PC-9 (cell line): ENCODE measurements at regions of chr1 and their contacts with region 1.

Region 1: DNA sequence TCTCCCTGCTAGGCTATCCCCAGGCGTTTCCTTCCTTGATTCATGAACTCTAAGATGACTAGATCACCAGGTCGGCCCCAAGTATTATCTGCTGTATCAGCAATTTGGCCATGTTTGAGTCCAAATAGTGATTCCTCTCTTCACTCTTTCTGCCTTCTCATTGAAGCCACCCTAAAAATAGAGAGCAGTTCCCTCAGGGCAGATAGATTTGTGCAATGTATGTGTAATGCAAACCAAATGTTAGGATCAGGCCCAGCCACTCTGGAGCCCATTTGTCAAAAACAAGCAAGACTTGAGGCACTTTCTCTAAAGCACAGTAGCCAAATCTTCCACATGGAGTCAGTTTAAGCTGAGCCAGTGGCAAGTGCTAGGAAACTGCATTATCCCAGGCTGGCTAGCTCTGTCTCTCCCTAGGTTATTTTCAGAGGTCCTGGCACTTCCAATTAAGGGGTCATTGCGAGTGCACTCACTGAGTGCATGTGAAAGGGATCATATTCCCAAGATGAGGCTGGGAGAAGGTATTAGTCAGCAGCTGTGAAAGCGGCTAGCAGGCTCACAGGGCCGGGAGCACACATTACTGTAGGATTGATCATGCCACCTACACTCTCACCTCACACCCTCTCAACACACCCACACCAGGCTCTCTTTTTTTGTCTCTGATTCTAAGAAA is 97.9 kb upstream of the RAB3GAP2 start:
- DNase-seq: peak; percentile 77 to 95
- H3K4me3 ChIP-seq: peak overlapping the region; percentile 10; the same call in 1 of the 2 replicates
- H3K27ac ChIP-seq: peak overlapping the region; percentile 94
- H3K4me1 ChIP-seq: peaks cover 54% of the 10 kb centered on the region
- H3K27me3 ChIP-seq: no peaks in the 10 kb centered on the region
- CTCF ChIP-seq: no peak

Region 2: DNA sequence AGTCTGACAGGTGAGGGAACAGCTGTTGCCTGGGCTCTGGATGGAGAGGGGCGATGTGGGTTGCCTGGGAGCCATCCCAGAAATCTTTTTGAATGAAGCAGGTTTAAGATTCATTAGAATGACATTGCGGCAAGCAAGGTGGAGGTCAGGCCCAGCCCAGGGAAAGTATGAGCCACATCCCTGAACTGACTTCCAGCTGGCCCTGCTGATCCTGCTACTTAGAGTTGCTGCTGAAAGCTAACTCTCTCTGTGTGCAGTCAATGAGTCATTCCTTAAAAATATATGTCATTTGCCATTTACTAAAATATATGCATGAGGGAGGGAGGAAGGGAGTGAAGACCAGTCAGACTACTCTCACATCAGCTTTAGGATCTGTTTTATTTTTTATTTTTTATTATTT is 43.6 kb before region 1 on chr1:
- CTCF ChIA-PET with region 1: interaction called, 4 read pairs
- POLR2A ChIA-PET with region 1: no interaction called
- intact Hi-C with region 1: loop called (anchors 1 kb)
- DNase-seq: peak; percentile 77 to 81
- H3K4me3 ChIP-seq: no peak overlapping the region
- H3K27ac ChIP-seq: peak overlapping the region; percentile 49; the same call in 1 of the 2 replicates
- H3K4me1 ChIP-seq: peaks cover 16% of the 10 kb centered on the region
- H3K27me3 ChIP-seq: no peaks in the 10 kb centered on the region
- CTCF ChIP-seq: no peak

Region 3: GRCh38 chr1:220336391-220337031 is 33.7 kb before region 1 on chr1:
- CTCF ChIA-PET with region 1: interaction called, 5 read pairs
- POLR2A ChIA-PET with region 1: no interaction called
- intact Hi-C with region 1: loop called (anchors 1 kb)
- DNase-seq: no peak
- H3K4me3 ChIP-seq: no peak overlapping the region
- H3K27ac ChIP-seq: peak overlapping the region; percentile 49
- H3K4me1 ChIP-seq: peaks cover 33% of the 10 kb centered on the region
- H3K27me3 ChIP-seq: no peaks in the 10 kb centered on the region
- CTCF ChIP-seq: no peak

Region 4: DNA sequence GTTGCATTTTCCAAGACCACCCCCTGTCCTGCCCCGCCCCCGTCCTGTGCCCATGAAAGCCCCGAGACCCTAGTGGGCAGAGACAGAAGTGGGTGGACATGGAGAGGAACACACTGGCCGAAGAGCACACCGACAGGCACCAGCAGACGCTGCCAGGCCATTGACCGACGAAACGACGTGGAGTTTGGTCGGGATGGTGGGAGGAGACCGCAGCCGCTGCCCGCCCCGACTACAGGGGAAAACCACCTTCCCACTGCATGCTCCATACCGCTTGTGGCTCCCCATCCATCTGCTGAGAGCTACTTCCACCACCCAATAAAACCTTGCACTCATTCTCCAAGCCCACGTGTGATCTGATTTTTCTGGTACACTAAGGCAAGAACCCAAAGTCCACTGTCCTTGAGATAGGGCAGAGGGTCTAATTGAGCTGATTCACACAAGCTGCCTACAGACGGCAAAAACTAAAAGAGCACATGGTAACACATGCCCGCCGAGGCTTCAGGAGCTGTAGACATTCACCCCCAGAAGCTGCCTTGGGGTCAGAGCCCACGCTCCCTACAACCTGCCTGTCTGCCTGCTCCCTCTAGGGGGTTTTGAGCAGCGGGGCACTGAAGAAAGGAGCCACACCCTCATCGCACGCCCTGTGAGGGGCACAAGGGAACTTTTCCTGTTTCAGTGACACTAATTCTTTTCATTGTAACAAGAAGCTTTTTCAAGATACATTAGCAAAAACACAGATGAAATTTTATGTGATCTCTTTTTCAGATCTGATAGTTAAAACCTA is 16.7 kb before region 1 on chr1:
- CTCF ChIA-PET with region 1: no interaction called
- POLR2A ChIA-PET with region 1: no interaction called
- intact Hi-C with region 1: no loop called
- DNase-seq: no peak
- H3K4me3 ChIP-seq: no peak overlapping the region
- H3K27ac ChIP-seq: no peak overlapping the region
- H3K4me1 ChIP-seq: no peaks in the 10 kb centered on the region
- H3K27me3 ChIP-seq: no peaks in the 10 kb centered on the region
- CTCF ChIP-seq: no peak

Region 5: DNA sequence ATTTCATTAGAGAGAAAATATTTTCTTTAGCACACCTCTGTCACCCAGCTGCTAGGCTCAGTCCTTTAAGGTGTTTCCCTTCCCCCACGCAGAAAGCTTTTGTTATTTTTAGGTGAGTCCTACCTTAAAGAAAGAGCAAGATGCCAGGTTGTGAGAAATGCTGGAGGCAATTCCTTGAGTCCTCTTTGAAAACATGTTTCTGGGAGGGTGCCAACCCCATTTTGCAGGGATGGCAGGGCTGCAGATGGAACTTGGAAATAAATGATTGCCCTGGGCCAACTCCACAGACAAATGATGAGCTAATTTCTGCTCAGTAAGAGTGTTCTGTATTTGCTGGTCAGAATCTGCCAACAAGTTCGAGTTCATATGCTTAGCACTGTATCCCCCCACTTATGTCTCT is 21.3 kb after region 1 on chr1:
- CTCF ChIA-PET with region 1: no interaction called
- POLR2A ChIA-PET with region 1: no interaction called
- intact Hi-C with region 1: loop called (anchors 2 kb)
- DNase-seq: peak; percentile 44 to 65
- H3K4me3 ChIP-seq: no peak overlapping the region
- H3K27ac ChIP-seq: no peak overlapping the region
- H3K4me1 ChIP-seq: peaks cover 18% of the 10 kb centered on the region
- H3K27me3 ChIP-seq: no peaks in the 10 kb centered on the region
- CTCF ChIP-seq: no peak

Region 6: DNA sequence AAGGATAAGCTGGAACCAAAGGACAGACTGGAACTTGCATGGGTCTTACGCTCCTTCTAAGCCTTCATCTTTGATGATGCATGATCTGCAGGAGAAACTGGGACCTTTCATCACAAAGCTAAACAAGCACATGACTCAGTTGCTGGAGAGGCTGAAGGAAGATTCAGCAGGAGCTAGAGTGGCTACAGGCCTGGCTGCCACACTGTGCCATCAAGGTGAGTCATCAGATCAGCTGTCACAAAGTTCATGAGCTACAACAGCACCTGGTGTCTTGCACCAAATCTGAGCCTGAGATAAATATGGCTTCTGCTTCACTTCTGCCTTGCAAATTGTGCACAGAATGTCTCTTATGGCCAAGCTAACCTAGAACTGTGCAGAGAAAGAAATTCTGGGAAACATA is 62.3 kb after region 1 on chr1:
- CTCF ChIA-PET with region 1: no interaction called
- POLR2A ChIA-PET with region 1: no interaction called
- intact Hi-C with region 1: loop called (anchors 1 kb)
- DNase-seq: peak; percentile 48 to 77
- H3K4me3 ChIP-seq: no peak overlapping the region
- H3K27ac ChIP-seq: no peak overlapping the region
- H3K4me1 ChIP-seq: peaks cover 30% of the 10 kb centered on the region
- H3K27me3 ChIP-seq: no peaks in the 10 kb centered on the region
- CTCF ChIP-seq: no peak

Region 7: GRCh38 chr1:220487297-220487820 is 117.2 kb after region 1 on chr1:
- CTCF ChIA-PET with region 1: no interaction called
- POLR2A ChIA-PET with region 1: no interaction called
- intact Hi-C with region 1: loop called (anchors 1 kb)
- DNase-seq: peak; percentile 68 to 90
- H3K4me3 ChIP-seq: no peak overlapping the region
- H3K27ac ChIP-seq: peak overlapping the region; percentile 84
- H3K4me1 ChIP-seq: peaks cover 12% of the 10 kb centered on the region
- H3K27me3 ChIP-seq: no peaks in the 10 kb centered on the region
- CTCF ChIP-seq: no peak